HCT116 (cell line): ENCODE measurements at regions of chr19 and their contacts with region 1.

Region 1: GRCh38 chr19:13861732-13862531 is 15.0 kb upstream of the NANOS3 start:
- DNase-seq: no peak
- ATAC-seq: peak; percentile 79
- H3K4me3 ChIP-seq: peak overlapping the region; percentile 40 to 55
- H3K27ac ChIP-seq: peak overlapping the region; percentile 83
- H3K4me1 ChIP-seq: peaks cover 37 to 67% of the 10 kb centered on the region in 2 experiments
- H3K27me3 ChIP-seq: no peaks in the 10 kb centered on the region
- CTCF ChIP-seq: peak; percentile 82 to 92 (median 90)
- POLR2A ChIP-seq: no peak
- RAD21 ChIP-seq: peak; percentile 98

Region 2: GRCh38 chr19:13597640-13598039 is 264.3 kb before region 1 on chr19:
- CTCF ChIA-PET with region 1: interaction called, 15 read pairs
- POLR2A ChIA-PET with region 1: no interaction called
- RAD21 ChIA-PET with region 1: no interaction called
- intact Hi-C with region 1: loop called (anchors 1 kb)
- DNase-seq: peak; percentile 57
- ATAC-seq: peak; percentile 98
- H3K4me3 ChIP-seq: no peak overlapping the region
- H3K27ac ChIP-seq: no peak overlapping the region
- H3K4me1 ChIP-seq: no peaks in the 10 kb centered on the region
- H3K27me3 ChIP-seq: 0 out of 2 replicates have a peak, but pooled peaks cover 4% of the 10 kb centered on the region
- CTCF ChIP-seq: peak; percentile 59 to 72 (median 64)
- POLR2A ChIP-seq: no peak
- RAD21 ChIP-seq: peak; percentile 95

Region 3: GRCh38 chr19:13784731-13785452 is 77.0 kb before region 1 on chr19:
- CTCF ChIA-PET with region 1: interaction called, 33 read pairs
- POLR2A ChIA-PET with region 1: interaction called, 11 read pairs
- RAD21 ChIA-PET with region 1: interaction called, 3 to 9 read pairs
- intact Hi-C with region 1: loop called (anchors 1 kb)
- DNase-seq: peak; percentile 39
- ATAC-seq: peak; percentile 83
- H3K4me3 ChIP-seq: no peak overlapping the region
- H3K27ac ChIP-seq: peak overlapping the region; percentile 41
- H3K4me1 ChIP-seq: peaks cover 35 to 58% of the 10 kb centered on the region in 2 experiments
- H3K27me3 ChIP-seq: no peaks in the 10 kb centered on the region
- CTCF ChIP-seq: peak; percentile 72 to 87 (median 76)
- POLR2A ChIP-seq: no peak
- RAD21 ChIP-seq: peak; percentile 96

Region 4: GRCh38 chr19:13833330-13834243 is 28.3 kb before region 1 on chr19:
- CTCF ChIA-PET with region 1: interaction called, 14 read pairs
- POLR2A ChIA-PET with region 1: interaction called, 5 read pairs
- RAD21 ChIA-PET with region 1: interaction called in 1 of 2 experiments, 6 read pairs
- intact Hi-C with region 1: no loop called
- DNase-seq: no peak
- ATAC-seq: peak; percentile 94
- H3K4me3 ChIP-seq: peak overlapping the region in 1 of 2 experiments; percentile 5; a peak in 2 of 4 replicates
- H3K27ac ChIP-seq: peak overlapping the region; percentile 38
- H3K4me1 ChIP-seq: peaks cover 37 to 55% of the 10 kb centered on the region in 2 experiments
- H3K27me3 ChIP-seq: no peaks in the 10 kb centered on the region
- CTCF ChIP-seq: peak in 2 of 3 experiments; percentile 64 to 70; a peak in 5 of 6 replicates
- POLR2A ChIP-seq: no peak
- RAD21 ChIP-seq: peak; percentile 60

Region 5: GRCh38 chr19:13846557-13847406 is 15.2 kb before region 1 on chr19:
- CTCF ChIA-PET with region 1: interaction called, 20 read pairs
- POLR2A ChIA-PET with region 1: interaction called, 29 read pairs
- RAD21 ChIA-PET with region 1: interaction called, 3 to 4 read pairs
- intact Hi-C with region 1: loop called (anchors 1 kb)
- DNase-seq: peak; percentile 90
- ATAC-seq: peak; percentile 36
- H3K4me3 ChIP-seq: peak overlapping the region; percentile 48 to 61
- H3K27ac ChIP-seq: peak overlapping the region; percentile 96
- H3K4me1 ChIP-seq: peaks cover 68 to 89% of the 10 kb centered on the region in 2 experiments
- H3K27me3 ChIP-seq: no peaks in the 10 kb centered on the region
- CTCF ChIP-seq: no peak
- POLR2A ChIP-seq: no peak
- RAD21 ChIP-seq: no peak